ENCODE measurements at regions of chr3 and their contacts with region 1.

Region 1: GRCh38 chr3:127672516-127673190 is at the start of gene ABTB1:
- DNase-seq: peak; percentile 79 to 86 (median 85)
- H3K4me3 ChIP-seq: peak within 1 kb of the TSS; percentile 61 to 80
- H3K4me3 Mint-ChIP-seq: peak within 1 kb of the TSS; percentile 88 to 94 (median 92)
- H3K27ac ChIP-seq: peak within 1 kb of the TSS; percentile 86
- H3K27ac Mint-ChIP-seq: peak within 1 kb of the TSS; percentile 90 to 98 (median 94)
- H3K4me1 ChIP-seq: peaks cover 31% of the 10 kb centered on the region
- H3K4me1 Mint-ChIP-seq: peaks cover 18 to 41% (median 28%) of the 10 kb centered on the region in 4 donors
- H3K27me3 ChIP-seq: no peaks in the 10 kb centered on the region
- H3K27me3 Mint-ChIP-seq: no peaks in the 10 kb centered on the region
- total RNA-seq, gene ABTB1: 167 to 169 TPM

Region 2: DNA sequence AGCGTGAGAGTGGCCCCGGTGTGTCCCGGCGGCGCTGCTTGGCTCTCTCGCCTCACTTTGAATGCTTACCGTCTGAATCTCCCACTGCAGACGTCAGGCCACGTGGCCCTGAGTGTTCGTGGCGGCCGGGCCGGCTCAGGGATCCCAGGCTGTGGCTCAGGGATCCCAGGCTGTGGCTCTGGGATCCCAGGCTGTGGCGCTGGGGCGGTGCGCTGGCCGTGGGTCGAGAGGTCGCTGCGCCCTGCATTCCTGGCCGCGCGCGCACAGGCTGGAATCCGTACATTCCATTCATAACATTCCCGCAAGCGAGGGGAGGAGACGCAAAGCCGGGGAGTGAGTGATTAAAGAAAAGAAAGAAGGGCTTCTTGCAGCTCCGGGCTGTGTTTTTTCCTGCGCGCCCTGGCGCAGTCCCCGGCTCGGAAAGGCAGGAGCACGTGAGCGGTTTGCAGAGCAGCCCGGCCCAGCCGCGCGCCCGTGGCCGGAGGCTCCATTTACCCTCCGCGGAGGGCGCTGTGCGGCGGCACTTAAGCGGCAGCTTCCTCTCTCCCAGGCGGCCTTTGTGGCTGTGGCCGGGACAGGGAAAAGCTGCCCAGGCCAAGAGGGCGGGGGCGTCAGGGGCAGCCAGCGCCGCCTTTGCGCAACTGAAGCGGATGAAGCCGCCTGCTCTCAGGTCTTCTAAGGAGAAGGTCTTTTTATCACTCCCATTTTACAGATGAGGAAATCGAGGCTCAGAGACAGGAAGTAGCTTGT is 1405.3 kb before region 1 on chr3:
- CTCF ChIA-PET with region 1: no interaction called
- POLR2A ChIA-PET with region 1: no interaction called
- intact Hi-C with region 1: no loop called
- DNase-seq: no peak
- H3K4me3 ChIP-seq: no peak overlapping the region
- H3K4me3 Mint-ChIP-seq: no peak overlapping the region
- H3K27ac ChIP-seq: no peak overlapping the region
- H3K27ac Mint-ChIP-seq: no peak overlapping the region
- H3K4me1 ChIP-seq: no peaks in the 10 kb centered on the region
- H3K4me1 Mint-ChIP-seq: peaks cover 0 to 8% (median 1%) of the 10 kb centered on the region in 4 donors
- H3K27me3 ChIP-seq: no peaks in the 10 kb centered on the region
- H3K27me3 Mint-ChIP-seq: peaks cover 8 to 14% of the 10 kb centered on the region in 2 donors

Region 3: GRCh38 chr3:126703512-126704462 is 968.9 kb before region 1 on chr3 and contains the start of gene CHCHD6:
- CTCF ChIA-PET with region 1: no interaction called
- POLR2A ChIA-PET with region 1: no interaction called
- intact Hi-C with region 1: loop called (anchors 10 kb)
- DNase-seq: peak; percentile 93 to 98 (median 95)
- H3K4me3 ChIP-seq: peak within 1 kb of the TSS; percentile 34 to 81
- H3K4me3 Mint-ChIP-seq: peak within 1 kb of the TSS; percentile 91 to 98 (median 96)
- H3K27ac ChIP-seq: peak within 1 kb of the TSS; percentile 49
- H3K27ac Mint-ChIP-seq: peak within 1 kb of the TSS; percentile 88 to 97 (median 92)
- H3K4me1 ChIP-seq: peaks cover 18% of the 10 kb centered on the region
- H3K4me1 Mint-ChIP-seq: peaks cover 10 to 26% (median 17%) of the 10 kb centered on the region in 4 donors
- H3K27me3 ChIP-seq: no peaks in the 10 kb centered on the region
- H3K27me3 Mint-ChIP-seq: peaks cover 11 to 26% of the 10 kb centered on the region in 2 donors
- total RNA-seq, gene CHCHD6: 7.3 to 8.9 TPM

Region 4: GRCh38 chr3:126971891-126972351 is 700.7 kb before region 1 on chr3:
- CTCF ChIA-PET with region 1: no interaction called
- POLR2A ChIA-PET with region 1: no interaction called
- intact Hi-C with region 1: no loop called
- DNase-seq: no peak
- H3K4me3 ChIP-seq: no peak overlapping the region
- H3K4me3 Mint-ChIP-seq: no peak overlapping the region
- H3K27ac ChIP-seq: no peak overlapping the region
- H3K27ac Mint-ChIP-seq: no peak overlapping the region
- H3K4me1 ChIP-seq: no peaks in the 10 kb centered on the region
- H3K4me1 Mint-ChIP-seq: no peaks in the 10 kb centered on the region
- H3K27me3 ChIP-seq: no peaks in the 10 kb centered on the region
- H3K27me3 Mint-ChIP-seq: peaks cover 7 to 9% of the 10 kb centered on the region in 2 donors

Region 5: GRCh38 chr3:127574880-127575878 is 97.5 kb before region 1 on chr3:
- CTCF ChIA-PET with region 1: interaction called, 5 read pairs
- POLR2A ChIA-PET with region 1: no interaction called
- intact Hi-C with region 1: loop called (anchors 2 kb)
- DNase-seq: peak; percentile 82 to 87 (median 84)
- H3K4me3 ChIP-seq: no peak overlapping the region
- H3K4me3 Mint-ChIP-seq: peak overlapping the region in 7 of 8 donors; percentile 14 to 63 (median 48)
- H3K27ac ChIP-seq: peak overlapping the region; percentile 16
- H3K27ac Mint-ChIP-seq: peak overlapping the region; percentile 24 to 92 (median 82)
- H3K4me1 ChIP-seq: peaks cover 9% of the 10 kb centered on the region
- H3K4me1 Mint-ChIP-seq: peaks cover 6 to 17% (median 11%) of the 10 kb centered on the region in 4 donors
- H3K27me3 ChIP-seq: no peaks in the 10 kb centered on the region
- H3K27me3 Mint-ChIP-seq: no peaks in the 10 kb centered on the region

Region 6: GRCh38 chr3:127598841-127599570 is 73.6 kb before region 1 on chr3:
- CTCF ChIA-PET with region 1: no interaction called
- POLR2A ChIA-PET with region 1: interaction called, 10 read pairs
- intact Hi-C with region 1: loop called (anchors 1 kb)
- DNase-seq: no peak
- H3K4me3 ChIP-seq: peak overlapping the region; percentile 47 to 62
- H3K4me3 Mint-ChIP-seq: peak overlapping the region; percentile 78 to 90 (median 86)
- H3K27ac ChIP-seq: peak overlapping the region; percentile 51
- H3K27ac Mint-ChIP-seq: peak overlapping the region; percentile 22 to 97 (median 87)
- H3K4me1 ChIP-seq: peaks cover 19% of the 10 kb centered on the region
- H3K4me1 Mint-ChIP-seq: peaks cover 5 to 29% (median 15%) of the 10 kb centered on the region in 4 donors
- H3K27me3 ChIP-seq: no peaks in the 10 kb centered on the region
- H3K27me3 Mint-ChIP-seq: no peaks in the 10 kb centered on the region

Region 7: DNA sequence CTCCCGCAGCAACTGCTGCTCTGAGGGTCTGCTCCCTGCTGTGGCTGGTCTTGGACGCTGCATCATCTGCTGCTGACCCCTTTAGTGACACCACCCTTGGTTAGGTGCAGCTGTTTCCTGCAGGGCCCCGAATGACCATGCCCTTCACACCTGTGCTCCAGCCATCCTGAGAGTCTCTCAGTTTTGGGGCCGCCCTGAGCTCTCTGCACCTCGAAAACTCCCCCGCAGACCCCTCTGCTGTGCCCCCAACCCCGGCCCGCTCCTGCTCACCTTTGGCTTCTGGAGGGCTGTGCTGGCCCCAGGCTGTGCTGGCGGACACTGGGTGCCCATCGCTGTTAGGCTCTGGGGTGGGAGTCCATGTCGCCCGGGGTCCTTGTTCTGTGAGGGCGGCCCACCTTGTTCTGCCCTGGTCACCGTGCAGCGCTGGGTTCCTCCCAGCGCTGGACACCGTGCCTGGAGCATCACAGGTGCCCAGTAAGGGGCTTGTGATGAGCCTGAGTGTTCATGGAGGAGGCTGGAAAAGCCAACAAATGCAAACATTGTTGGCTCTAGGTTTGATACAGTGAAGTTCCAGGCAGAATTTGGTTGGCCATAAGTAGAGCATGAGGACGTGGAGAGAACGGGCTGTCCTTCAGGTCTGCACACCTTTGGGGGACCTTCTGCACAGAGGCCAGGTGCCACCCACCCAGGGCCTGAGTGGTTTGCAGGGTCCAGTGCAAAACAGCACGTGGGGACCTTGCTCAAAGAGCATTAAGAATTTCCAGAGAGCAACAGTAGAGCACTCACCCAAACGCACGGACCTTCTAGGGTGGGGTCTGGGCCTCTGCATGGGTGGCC is 12.4 kb after region 1 on chr3:
- CTCF ChIA-PET with region 1: interaction called, 3 read pairs
- POLR2A ChIA-PET with region 1: interaction called, 25 read pairs
- intact Hi-C with region 1: no loop called
- DNase-seq: no peak
- H3K4me3 ChIP-seq: no peak overlapping the region
- H3K4me3 Mint-ChIP-seq: no peak overlapping the region
- H3K27ac ChIP-seq: no peak overlapping the region
- H3K27ac Mint-ChIP-seq: peak overlapping the region in 1 of 7 donors; percentile 73
- H3K4me1 ChIP-seq: peaks cover 6% of the 10 kb centered on the region
- H3K4me1 Mint-ChIP-seq: peaks cover 3 to 13% (median 7%) of the 10 kb centered on the region in 4 donors
- H3K27me3 ChIP-seq: no peaks in the 10 kb centered on the region
- H3K27me3 Mint-ChIP-seq: no peaks in the 10 kb centered on the region

Measured in CD4-positive, alpha-beta memory T cell (primary cell).